Keratinocyte (primary cell): ENCODE measurements at regions of chr20 and their contacts with region 1.

Region 1: DNA sequence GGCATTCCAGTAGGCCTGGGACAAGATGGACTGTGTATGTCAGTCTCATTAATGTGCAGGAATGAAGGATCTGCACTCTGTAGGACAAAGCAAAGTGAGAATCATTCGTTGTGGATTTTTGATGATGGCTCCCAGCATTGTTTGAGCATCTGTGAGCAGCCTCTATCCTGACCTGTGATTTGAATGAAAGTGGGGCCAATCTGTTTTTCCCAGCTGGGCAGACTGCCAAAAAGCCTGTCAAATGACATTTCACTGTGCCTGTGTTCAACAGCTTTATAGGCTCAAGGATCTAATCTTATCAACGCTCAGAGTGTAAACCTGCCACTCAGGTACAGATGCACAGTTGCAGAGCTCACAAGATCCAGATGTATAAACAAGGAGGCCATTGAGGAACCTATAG is 86.7 kb upstream of the SYNDIG1 start:
- DNase-seq: no peak
- H3K4me3 ChIP-seq: no peak overlapping the region
- H3K27ac ChIP-seq: no peak overlapping the region
- H3K4me1 ChIP-seq: no peaks in the 10 kb centered on the region
- H3K27me3 ChIP-seq: no peaks in the 10 kb centered on the region
- CTCF ChIP-seq: no peak

Region 2: DNA sequence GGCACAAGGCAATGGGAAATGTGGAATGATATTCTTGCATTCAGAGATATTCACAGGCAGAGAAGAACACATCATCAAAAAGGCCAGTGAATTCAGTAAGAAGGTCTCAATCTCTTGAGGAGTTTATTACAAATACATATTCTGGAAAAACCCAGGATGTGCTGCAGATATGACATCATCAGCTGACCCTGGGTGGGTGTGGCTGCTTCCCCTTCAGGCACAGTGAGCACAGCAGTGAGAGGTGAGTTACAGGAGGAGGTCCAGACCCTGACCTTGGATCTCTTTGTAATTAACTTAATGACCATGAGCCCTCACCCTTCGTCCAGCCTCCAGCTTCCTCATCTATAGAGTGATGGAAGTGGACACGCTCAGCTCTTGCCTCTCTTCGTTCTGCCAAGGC is 60.8 kb before region 1 on chr20:
- dilution Hi-C with region 1: loop called (anchors 5 kb)
- DNase-seq: no peak
- H3K4me3 ChIP-seq: no peak overlapping the region
- H3K27ac ChIP-seq: no peak overlapping the region
- H3K4me1 ChIP-seq: peaks cover 6% of the 10 kb centered on the region
- H3K27me3 ChIP-seq: no peaks in the 10 kb centered on the region
- CTCF ChIP-seq: no peak